Ovary (tissue), 10 donors: ENCODE measurements at regions of chr18 and their contacts with region 1.

Region 1: DNA sequence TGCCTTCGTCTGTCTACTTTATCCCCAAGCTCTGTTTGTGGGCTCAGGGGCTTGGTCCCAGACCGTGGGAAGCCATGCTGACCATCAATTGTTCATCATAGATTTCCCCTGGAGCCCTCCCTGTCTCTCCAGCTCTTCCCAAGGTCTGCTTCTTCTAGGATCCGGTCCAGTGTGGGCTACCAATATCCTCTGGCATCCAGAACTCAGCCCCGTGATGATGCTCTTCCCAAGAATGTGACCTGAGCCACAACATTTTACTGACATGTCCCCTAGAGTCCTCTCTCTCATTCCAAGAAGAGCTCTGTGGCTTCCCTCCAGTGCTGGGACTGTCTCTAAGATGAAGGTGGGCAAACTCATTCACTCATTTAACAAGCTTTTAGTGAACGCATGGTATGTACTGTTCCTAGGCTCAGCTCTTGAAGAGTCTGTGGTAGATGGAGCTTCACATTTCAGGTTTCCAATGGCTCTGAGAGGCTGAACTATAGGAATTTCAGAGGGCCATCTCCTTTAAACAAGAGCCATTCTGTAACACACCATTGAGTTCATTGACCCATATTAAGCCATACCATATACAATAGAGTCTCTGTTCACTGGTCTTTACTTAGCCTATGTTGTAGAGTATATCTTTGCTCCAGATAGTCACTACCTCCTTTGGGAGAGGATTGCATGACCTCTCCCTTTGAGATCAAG is 142.0 kb upstream of the APCDD1 start:
- DNase-seq: no peak
- H3K4me3 ChIP-seq: no peak overlapping the region
- H3K27ac ChIP-seq: no peak overlapping the region
- H3K4me1 ChIP-seq: no peaks in the 10 kb centered on the region
- H3K27me3 ChIP-seq: no peaks in the 10 kb centered on the region
- CTCF ChIP-seq: no peak
- EP300 ChIP-seq: no peak
- POLR2A ChIP-seq: no peak

Region 2: DNA sequence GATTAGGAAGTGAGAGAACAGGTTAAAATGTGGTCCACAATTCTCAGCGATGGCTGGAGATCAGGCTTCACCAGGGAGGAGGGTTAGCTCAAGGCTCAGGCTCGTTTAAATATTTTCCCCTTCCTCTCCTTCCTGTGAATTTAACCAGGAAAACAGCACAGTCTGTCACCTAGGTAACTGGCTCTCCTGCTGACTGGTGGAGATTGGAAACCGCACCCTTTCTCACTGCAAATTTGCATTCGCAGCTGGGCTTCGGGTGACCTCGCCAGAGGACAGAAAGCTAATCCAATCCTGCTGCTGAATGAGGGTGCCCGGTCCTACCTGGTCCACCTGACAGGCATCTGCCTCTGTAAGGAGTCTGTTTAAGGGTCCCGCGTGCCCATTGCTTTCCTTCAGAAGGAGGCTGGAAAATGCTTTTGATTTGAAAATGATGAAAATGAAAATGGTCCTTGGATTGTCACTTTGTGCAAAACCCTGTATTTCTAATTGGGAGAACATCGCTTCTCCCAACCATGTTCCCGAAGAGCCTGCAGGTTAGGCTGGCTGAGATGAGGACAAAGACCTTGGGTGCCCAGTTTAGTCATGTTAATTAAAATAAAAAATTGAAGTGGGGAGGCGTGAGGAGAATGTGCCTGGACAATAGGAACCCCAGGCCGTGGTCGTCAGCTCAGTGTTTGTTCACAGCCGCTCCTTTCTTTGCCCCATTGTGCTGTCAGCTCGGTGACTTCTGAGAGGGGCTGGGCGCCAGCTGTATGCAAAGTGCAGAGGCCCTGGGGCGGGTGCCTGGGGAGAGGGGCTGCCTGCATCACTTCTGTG is 1650.5 kb before region 1 on chr18:
- intact Hi-C with region 1: no loop called
- DNase-seq: no peak
- H3K4me3 ChIP-seq: no peak overlapping the region
- H3K27ac ChIP-seq: no peak overlapping the region
- H3K4me1 ChIP-seq: peaks cover 2% of the 10 kb centered on the region
- H3K27me3 ChIP-seq: no peaks in the 10 kb centered on the region
- CTCF ChIP-seq: no peak
- EP300 ChIP-seq: no peak
- POLR2A ChIP-seq: no peak

Region 3: GRCh38 chr18:10059610-10060468 is 252.6 kb before region 1 on chr18:
- intact Hi-C with region 1: no loop called
- DNase-seq: peak in 2 of 5 donors; percentile 24 to 36
- H3K4me3 ChIP-seq: no peak overlapping the region
- H3K27ac ChIP-seq: peak overlapping the region; percentile 30 to 37
- H3K4me1 ChIP-seq: peaks cover 12% of the 10 kb centered on the region
- H3K27me3 ChIP-seq: no peaks in the 10 kb centered on the region
- CTCF ChIP-seq: no peak
- EP300 ChIP-seq: no peak
- POLR2A ChIP-seq: no peak

Region 4: DNA sequence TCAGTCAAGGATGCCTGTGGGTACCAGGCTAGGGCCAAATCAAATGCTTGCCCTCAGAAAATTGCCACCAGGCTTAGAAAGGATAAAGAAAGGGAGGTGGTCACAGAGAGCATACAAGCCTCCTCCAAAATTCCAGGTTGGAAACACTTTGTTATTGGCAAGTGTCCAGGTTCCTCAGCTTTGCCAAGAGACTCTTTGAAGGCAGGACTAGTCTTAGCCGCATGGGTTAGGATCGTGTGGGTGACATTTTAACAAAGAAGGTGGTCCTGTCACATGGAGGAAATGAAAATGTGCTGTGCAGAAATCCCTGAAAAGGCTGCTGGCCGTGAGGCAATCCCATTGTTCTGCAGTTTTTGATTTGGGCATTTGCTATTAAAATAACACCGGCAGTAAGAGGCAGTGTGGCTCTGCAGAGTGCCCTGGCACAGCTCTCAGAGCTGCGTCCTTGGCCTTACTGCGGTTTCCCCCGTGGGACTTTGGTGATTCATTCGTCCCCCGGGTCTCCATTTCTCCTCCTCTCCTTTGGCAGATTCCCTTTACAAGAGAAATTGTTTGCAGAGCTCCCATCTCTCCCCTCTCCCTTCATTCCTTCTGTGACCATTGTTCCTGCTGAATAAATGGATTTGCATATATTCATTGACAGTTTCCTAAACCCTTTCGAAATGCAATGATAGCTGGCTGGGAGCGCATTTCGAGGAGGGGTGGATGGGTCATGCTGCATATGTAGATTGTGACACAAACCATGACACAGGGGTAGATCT is 211.3 kb before region 1 on chr18:
- intact Hi-C with region 1: no loop called
- DNase-seq: peak; percentile 69 to 81 (median 76)
- H3K4me3 ChIP-seq: no peak overlapping the region
- H3K27ac ChIP-seq: peak overlapping the region in 1 of 2 donors; percentile 63
- H3K4me1 ChIP-seq: peaks cover 21% of the 10 kb centered on the region
- H3K27me3 ChIP-seq: no peaks in the 10 kb centered on the region
- CTCF ChIP-seq: no peak
- EP300 ChIP-seq: no peak
- POLR2A ChIP-seq: no peak

Region 5: GRCh38 chr18:10131460-10132395 is 180.7 kb before region 1 on chr18:
- intact Hi-C with region 1: no loop called
- DNase-seq: peak; percentile 30 to 62 (median 37)
- H3K4me3 ChIP-seq: peak overlapping the region; percentile 17
- H3K27ac ChIP-seq: no peak overlapping the region
- H3K4me1 ChIP-seq: peaks cover 6% of the 10 kb centered on the region
- H3K27me3 ChIP-seq: no peaks in the 10 kb centered on the region
- CTCF ChIP-seq: no peak
- EP300 ChIP-seq: no peak
- POLR2A ChIP-seq: no peak

Region 6: GRCh38 chr18:10293966-10294365 is 18.5 kb before region 1 on chr18:
- intact Hi-C with region 1: loop called in 1 of 4 experiments (anchors 2 kb)
- DNase-seq: no peak
- H3K4me3 ChIP-seq: no peak overlapping the region
- H3K27ac ChIP-seq: no peak overlapping the region
- H3K4me1 ChIP-seq: no peaks in the 10 kb centered on the region
- H3K27me3 ChIP-seq: no peaks in the 10 kb centered on the region
- CTCF ChIP-seq: no peak
- EP300 ChIP-seq: no peak
- POLR2A ChIP-seq: no peak